Panc1 (cell line): ENCODE measurements at regions of chr10 and their contacts with region 1.

Region 1: GRCh38 chr10:17257466-17258321 is 29.7 kb downstream of the VIM start:
- DNase-seq: no peak
- ATAC-seq: peak; percentile 95
- H3K4me3 ChIP-seq: peak overlapping the region in 1 of 2 experiments; percentile 48; a peak in 2 of 4 replicates
- H3K27ac ChIP-seq: peak overlapping the region; percentile 89
- H3K4me1 ChIP-seq: peaks cover 7% of the 10 kb centered on the region
- H3K27me3 ChIP-seq: no peaks in the 10 kb centered on the region
- CTCF ChIP-seq: peak; percentile 80

Region 2: DNA sequence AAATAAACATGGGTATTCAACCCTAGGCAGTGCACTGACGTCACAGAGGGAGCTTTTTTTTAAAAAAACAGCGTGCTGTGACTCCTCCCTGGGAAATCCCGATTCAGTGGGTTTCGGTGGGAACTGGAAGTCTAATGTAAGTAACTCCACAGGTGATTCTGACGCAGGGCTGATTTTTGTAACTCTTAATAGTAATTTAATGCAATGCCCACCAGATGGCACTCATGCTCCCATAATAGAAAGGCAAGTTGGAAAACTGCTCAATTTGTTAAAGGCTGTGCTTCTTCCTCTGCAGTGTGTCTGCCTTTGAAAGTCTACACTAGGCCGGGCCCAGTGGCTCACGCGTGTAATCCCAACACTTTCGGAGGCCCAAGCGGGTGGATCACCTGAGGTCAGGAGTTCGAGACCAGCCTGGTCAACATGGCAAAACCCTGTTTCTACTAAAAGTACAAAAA is 429.6 kb before region 1 on chr10:
- CTCF ChIA-PET with region 1: interaction called, 5 read pairs
- POLR2A ChIA-PET with region 1: no interaction called
- in situ Hi-C with region 1: no loop called
- intact Hi-C with region 1: loop called (anchors 5 kb)
- DNase-seq: peak; percentile 55
- ATAC-seq: peak; percentile 87
- H3K4me3 ChIP-seq: peak overlapping the region; percentile 1 to 23; a peak in 3 of 4 replicates
- H3K27ac ChIP-seq: peak overlapping the region; percentile 72
- H3K4me1 ChIP-seq: peaks cover 15% of the 10 kb centered on the region
- H3K27me3 ChIP-seq: no peaks in the 10 kb centered on the region
- CTCF ChIP-seq: peak; percentile 66

Region 3: GRCh38 chr10:16915300-16915699 is 342.4 kb before region 1 on chr10:
- CTCF ChIA-PET with region 1: no interaction called
- POLR2A ChIA-PET with region 1: no interaction called
- in situ Hi-C with region 1: no loop called
- intact Hi-C with region 1: no loop called
- DNase-seq: no peak
- ATAC-seq: no peak
- H3K4me3 ChIP-seq: no peak overlapping the region
- H3K27ac ChIP-seq: no peak overlapping the region
- H3K4me1 ChIP-seq: no peaks in the 10 kb centered on the region
- H3K27me3 ChIP-seq: no peaks in the 10 kb centered on the region
- CTCF ChIP-seq: peak; percentile 9; the same call in 1 of the 2 replicates